Activated CD4-positive, alpha-beta T cell treated with anti-CD3 and anti-CD28 coated beads for 36 hours (primary cell): ENCODE measurements at regions of chr15 and their contacts with region 1.

Region 1: DNA sequence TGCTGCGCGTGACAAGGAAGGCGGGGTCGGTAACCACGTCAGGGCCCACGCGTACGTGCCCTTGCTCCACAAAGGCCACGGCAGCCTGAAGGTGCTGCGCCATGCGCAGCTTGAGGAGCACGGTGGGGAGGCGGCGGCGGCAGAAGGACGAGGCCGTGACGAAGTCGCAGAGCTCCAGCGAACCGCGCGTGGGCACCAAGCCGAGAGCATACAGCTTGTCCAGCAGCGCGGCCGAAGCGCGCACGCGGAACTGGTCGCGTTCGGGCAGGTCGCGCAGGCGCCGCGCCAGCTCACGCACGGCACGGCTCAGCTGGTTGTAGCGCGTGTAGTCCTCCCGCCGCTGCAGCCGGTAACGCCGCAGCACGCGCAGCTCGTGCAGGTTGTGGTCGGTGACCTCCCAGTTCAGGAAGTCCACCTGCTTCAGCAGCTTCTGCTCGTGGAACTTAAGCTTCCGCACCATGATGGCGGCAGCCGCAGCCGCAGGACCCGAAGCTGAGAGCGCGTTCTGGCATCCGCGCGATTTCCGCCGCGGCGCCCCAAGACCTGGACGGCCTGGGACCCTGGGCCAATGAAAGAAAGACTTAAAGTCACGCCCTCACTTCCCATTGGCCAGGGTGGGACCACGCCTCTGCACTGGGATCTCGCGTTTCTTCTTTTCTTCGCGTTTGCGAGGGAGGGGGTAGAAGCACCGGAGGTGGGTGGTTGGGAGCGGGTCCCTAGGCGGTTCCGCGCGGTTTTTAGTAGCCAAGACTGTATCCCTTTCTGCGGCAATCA is at the start of gene IMP3:
- DNase-seq: peak; percentile 96
- ATAC-seq: peak; percentile 92
- H3K4me3 Mint-ChIP-seq: peak within 1 kb of the TSS; percentile 99
- H3K27ac Mint-ChIP-seq: peak within 1 kb of the TSS; percentile 96
- H3K4me1 Mint-ChIP-seq: peaks cover 25% of the 10 kb centered on the region
- H3K27me3 Mint-ChIP-seq: no peaks in the 10 kb centered on the region
- total RNA-seq, gene IMP3: 80.3 to 87.5 TPM

Region 2: GRCh38 chr15:74787251-74788041 is 852.5 kb before region 1 on chr15:
- CTCF ChIA-PET with region 1: no interaction called
- POLR2A ChIA-PET with region 1: no interaction called
- intact Hi-C with region 1: loop called in 1 of 2 experiments (anchors 5 kb)
- DNase-seq: peak; percentile 97
- ATAC-seq: peak; percentile 74
- H3K4me3 Mint-ChIP-seq: peak overlapping the region; percentile 89
- H3K27ac Mint-ChIP-seq: peak overlapping the region; percentile 100
- H3K4me1 Mint-ChIP-seq: peaks cover 58% of the 10 kb centered on the region
- H3K27me3 Mint-ChIP-seq: no peaks in the 10 kb centered on the region

Region 3: GRCh38 chr15:75508840-75509532 is 130.9 kb before region 1 on chr15:
- CTCF ChIA-PET with region 1: interaction called, 8 read pairs
- POLR2A ChIA-PET with region 1: no interaction called
- intact Hi-C with region 1: loop called (anchors 1 kb)
- DNase-seq: peak; percentile 13
- ATAC-seq: no peak
- H3K4me3 Mint-ChIP-seq: no peak overlapping the region
- H3K27ac Mint-ChIP-seq: no peak overlapping the region
- H3K4me1 Mint-ChIP-seq: no peaks in the 10 kb centered on the region
- H3K27me3 Mint-ChIP-seq: no peaks in the 10 kb centered on the region

Region 4: DNA sequence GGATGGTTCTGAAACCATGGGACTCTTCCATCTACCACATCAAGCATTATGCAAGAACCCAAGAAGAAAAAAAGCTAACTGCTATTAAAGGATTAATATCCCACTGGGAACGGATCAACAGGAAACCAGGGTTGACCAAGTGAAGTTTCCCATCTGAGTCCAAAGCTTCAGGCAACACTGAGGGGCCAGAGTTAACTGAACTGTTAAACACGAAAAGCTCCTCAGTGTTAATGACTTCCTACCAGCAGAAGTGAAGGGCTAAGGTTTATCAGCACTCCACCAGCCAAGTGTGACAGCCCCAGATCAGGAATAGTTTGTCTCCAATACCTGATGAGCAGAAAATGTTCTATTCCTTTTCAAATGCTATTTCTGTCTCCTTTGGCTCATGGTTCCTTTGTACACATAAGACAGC is 97.5 kb before region 1 on chr15:
- CTCF ChIA-PET with region 1: no interaction called
- POLR2A ChIA-PET with region 1: no interaction called
- intact Hi-C with region 1: no loop called
- DNase-seq: no peak
- ATAC-seq: no peak
- H3K4me3 Mint-ChIP-seq: no peak overlapping the region
- H3K27ac Mint-ChIP-seq: no peak overlapping the region
- H3K4me1 Mint-ChIP-seq: peaks cover 12% of the 10 kb centered on the region
- H3K27me3 Mint-ChIP-seq: no peaks in the 10 kb centered on the region

Region 5: DNA sequence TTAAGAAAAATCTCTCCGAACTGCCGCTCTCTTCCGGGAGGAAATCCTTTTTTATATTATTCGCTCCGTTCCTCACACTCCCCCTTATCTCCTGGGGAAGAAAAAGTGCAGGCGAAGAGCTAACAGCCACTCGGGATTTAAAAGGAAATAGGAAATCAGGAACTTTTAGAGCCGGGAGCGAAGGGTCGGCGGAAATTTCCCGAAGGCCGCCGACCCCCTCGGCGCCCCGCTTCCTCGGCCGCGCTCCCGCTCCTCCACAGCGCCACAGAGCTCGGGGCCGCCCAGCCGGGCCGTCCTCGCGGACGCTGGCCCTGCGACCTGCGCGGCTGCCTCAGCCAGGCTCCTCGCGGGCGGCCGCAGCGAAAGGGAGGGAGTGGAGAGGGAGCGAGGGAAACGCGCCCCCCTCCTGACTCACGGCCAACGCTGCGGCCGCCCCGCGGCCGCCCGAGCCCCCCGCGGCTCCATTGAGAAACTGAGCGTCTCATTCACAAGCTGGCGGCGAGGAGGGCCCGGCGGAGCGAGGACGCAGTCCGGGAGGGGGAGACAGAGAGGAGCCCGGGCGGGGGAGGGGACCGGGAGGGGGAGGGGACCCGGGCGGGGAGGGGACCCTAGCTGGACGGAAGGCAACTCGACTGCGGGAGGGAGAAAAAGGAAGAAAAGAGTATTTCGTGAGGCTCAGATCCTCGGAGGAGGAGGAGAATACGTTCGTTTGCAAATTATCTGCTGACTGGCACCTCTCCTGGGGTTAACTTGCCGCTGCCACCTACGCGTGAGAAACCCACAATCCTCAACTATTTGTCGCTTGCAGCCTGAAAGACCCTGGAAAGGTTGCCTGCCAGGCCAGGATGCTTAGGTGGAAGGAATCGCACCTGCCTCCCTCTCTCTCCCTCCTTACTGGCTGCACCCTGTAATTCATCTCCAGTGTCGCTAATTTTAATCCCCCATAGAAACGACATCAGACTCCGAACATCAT is 60.7 kb before region 1 on chr15 and contains the start of gene PTPN9:
- CTCF ChIA-PET with region 1: interaction called, 4 read pairs
- POLR2A ChIA-PET with region 1: interaction called, 6 read pairs
- intact Hi-C with region 1: loop called (anchors 1 to 2 kb)
- DNase-seq: peak; percentile 88
- ATAC-seq: peak; percentile 80
- H3K4me3 Mint-ChIP-seq: peak within 1 kb of the TSS; percentile 87
- H3K27ac Mint-ChIP-seq: peak within 1 kb of the TSS; percentile 94
- H3K4me1 Mint-ChIP-seq: peaks cover 13% of the 10 kb centered on the region
- H3K27me3 Mint-ChIP-seq: no peaks in the 10 kb centered on the region
- total RNA-seq, gene PTPN9: 15.0 to 16.5 TPM

Region 6: DNA sequence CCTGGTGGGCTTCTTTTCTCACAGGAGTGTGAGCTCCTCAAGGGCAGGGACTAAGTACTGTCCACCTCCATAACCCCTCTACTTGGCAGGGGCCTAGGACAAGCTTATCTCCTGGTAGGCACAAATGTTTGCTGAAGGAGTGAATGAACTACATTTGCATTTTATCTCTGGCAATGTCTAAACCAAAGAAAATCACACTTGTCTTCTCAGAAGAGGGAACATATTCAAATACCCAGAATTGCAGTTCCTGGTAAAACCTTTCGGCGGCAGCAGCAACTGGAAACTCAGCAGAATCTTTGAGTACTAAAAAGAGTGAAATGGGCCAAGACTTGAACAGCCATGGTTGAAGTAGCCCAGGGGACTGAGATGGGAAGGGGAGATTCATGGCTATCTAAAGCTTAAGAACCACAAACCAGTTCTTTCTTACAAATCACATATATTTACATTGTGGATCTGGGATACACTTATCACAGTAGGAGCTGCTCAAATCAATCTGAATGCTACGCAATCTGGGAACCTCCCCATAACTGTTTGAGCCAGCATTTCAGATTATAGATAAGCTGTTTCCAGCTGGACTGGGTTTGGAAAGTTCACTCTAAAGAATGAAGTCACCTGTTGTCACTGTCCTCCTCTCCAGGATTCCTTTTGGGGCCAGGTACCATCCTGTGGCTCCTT is 42.1 kb before region 1 on chr15:
- CTCF ChIA-PET with region 1: interaction called, 15 read pairs
- POLR2A ChIA-PET with region 1: no interaction called
- intact Hi-C with region 1: loop called in 1 of 2 experiments (anchors 1 kb)
- DNase-seq: peak; percentile 64
- ATAC-seq: peak; percentile 75
- H3K4me3 Mint-ChIP-seq: no peak overlapping the region
- H3K27ac Mint-ChIP-seq: peak overlapping the region; percentile 85
- H3K4me1 Mint-ChIP-seq: peaks cover 25% of the 10 kb centered on the region
- H3K27me3 Mint-ChIP-seq: no peaks in the 10 kb centered on the region

Region 7: GRCh38 chr15:75903331-75904239 is 263.7 kb after region 1 on chr15 and contains the start of gene FBXO22:
- CTCF ChIA-PET with region 1: no interaction called
- POLR2A ChIA-PET with region 1: no interaction called
- intact Hi-C with region 1: loop called in 1 of 2 experiments (anchors 1 kb)
- DNase-seq: peak; percentile 97
- ATAC-seq: peak; percentile 97
- H3K4me3 Mint-ChIP-seq: peak within 1 kb of the TSS; percentile 97
- H3K27ac Mint-ChIP-seq: peak within 1 kb of the TSS; percentile 98
- H3K4me1 Mint-ChIP-seq: peaks cover 40% of the 10 kb centered on the region
- H3K27me3 Mint-ChIP-seq: no peaks in the 10 kb centered on the region
- total RNA-seq, gene FBXO22: 51.4 to 59.2 TPM